HepG2 (cell line): ENCODE measurements at regions of chr1 and their contacts with region 1.

Region 1: GRCh38 chr1:182035097-182035782 is 26.3 kb downstream of the ZNF648 start:
- DNase-seq: no peak
- ATAC-seq: 0 out of 3 replicates have a peak, but pooled peaks have one; percentile 30
- H3K4me3 ChIP-seq: no peak overlapping the region
- H3K27ac ChIP-seq: no peak overlapping the region
- H3K4me1 ChIP-seq: peaks cover 2% of the 10 kb centered on the region; the same call in 1 of the 2 replicates
- H3K27me3 ChIP-seq: no peaks in the 10 kb centered on the region
- CTCF ChIP-seq: peak; percentile 23; the same call in 1 of the 2 replicates
- EP300 ChIP-seq: no peak
- POLR2A ChIP-seq: no peak
- RAD21 ChIP-seq: no peak

Region 2: GRCh38 chr1:182054698-182055326 is 19.6 kb after region 1 on chr1:
- CTCF ChIA-PET with region 1: no interaction called
- POLR2A ChIA-PET with region 1: no interaction called
- in situ Hi-C with region 1: no loop called
- intact Hi-C with region 1: loop called (anchors 1 kb)
- DNase-seq: peak; percentile 39
- ATAC-seq: peak; percentile 65
- H3K4me3 ChIP-seq: no peak overlapping the region
- H3K27ac ChIP-seq: no peak overlapping the region
- H3K4me1 ChIP-seq: no peaks in the 10 kb centered on the region
- H3K27me3 ChIP-seq: no peaks in the 10 kb centered on the region
- CTCF ChIP-seq: peak; percentile 52
- EP300 ChIP-seq: no peak
- POLR2A ChIP-seq: no peak
- RAD21 ChIP-seq: no peak